ENCODE measurements at regions of chr6 and their contacts with region 1.

Region 1: GRCh38 chr6:1767481-1768251 is 158.0 kb downstream of the FOXC1 start:
- H3K4me3 Mint-ChIP-seq: no peak overlapping the region
- H3K27ac Mint-ChIP-seq: no peak overlapping the region
- H3K4me1 Mint-ChIP-seq: no peaks in the 10 kb centered on the region
- H3K27me3 Mint-ChIP-seq: no peaks in the 10 kb centered on the region

Region 2: DNA sequence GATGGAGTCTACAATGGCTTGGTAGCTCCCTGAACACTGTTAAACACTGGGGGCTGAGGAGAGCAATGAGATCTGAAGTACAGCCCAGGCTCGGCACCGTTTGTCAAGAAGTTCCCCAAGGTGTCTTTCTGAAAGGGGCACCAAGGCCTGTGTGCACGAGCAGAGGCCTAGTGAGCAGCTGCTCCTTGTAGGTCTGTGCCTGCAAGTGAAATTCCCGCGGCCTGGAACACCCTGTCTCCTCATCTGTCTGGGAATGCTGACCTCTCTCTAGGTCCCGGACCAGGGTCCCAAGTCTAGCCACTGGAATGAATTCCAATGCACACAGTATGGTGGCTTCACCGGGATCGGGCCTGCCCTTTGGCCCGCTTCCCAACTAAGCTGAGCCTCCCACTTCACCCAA is 23.1 kb before region 1 on chr6:
- intact Hi-C with region 1: loop called (anchors 1 kb)
- H3K4me3 Mint-ChIP-seq: no peak overlapping the region
- H3K27ac Mint-ChIP-seq: no peak overlapping the region
- H3K4me1 Mint-ChIP-seq: no peaks in the 10 kb centered on the region
- H3K27me3 Mint-ChIP-seq: no peaks in the 10 kb centered on the region

Measured in dendritic cell treated with granulocyte-macrophage colony-stimulating factor and Interleukin-4, amounts not matched to agents 40 ng/mL and 50 ng/mL, for 4 days (primary cell).